ENCODE measurements at regions of chr7 and their contacts with region 1.

Region 1: GRCh38 chr7:133011746-133012145 is 70.1 kb downstream of the CHCHD3 start:
- DNase-seq: no peak
- H3K4me3 ChIP-seq: no peak overlapping the region
- H3K27ac ChIP-seq: no peak overlapping the region
- H3K4me1 ChIP-seq: no peaks in the 10 kb centered on the region
- H3K27me3 ChIP-seq: no peaks in the 10 kb centered on the region
- CTCF ChIP-seq: no peak

Region 2: DNA sequence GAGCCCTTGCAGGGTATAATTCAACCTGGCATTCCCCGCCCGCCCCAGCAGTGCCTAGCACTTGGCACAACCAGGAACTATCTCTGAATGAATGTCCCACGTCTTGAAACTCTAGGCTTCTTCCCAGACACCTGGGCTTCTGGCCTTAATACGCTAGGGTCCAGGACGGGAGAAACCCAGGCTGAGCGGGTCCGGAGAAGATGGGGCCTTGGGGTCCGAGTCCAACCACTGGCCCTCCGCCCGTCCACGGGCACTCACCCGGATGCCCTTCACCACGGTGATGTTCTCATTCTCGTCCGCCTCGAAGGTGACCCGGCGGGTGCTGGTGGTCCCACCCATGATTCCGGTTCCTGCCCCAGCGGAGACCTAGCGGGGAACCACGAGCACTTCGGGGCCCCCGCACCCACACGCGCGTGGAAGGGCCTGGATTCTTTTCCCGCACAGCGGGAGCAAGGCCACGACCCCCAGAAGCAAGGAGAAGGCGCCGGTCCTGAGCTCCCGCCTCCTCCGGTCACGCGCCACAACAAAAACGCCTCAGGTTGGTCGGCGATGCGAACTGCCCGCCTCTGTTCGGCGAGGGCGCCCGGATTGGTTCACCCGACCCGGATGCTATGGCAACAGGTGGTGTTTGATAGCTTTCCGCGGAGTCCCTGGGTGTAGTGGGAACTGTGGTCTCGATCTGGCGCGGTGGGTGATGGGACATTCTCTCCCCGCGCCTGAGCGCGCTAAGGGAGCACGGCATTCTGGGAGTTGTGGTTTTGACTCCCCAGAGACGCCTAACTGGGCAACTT is 70.0 kb after region 1 on chr7 and contains the start of gene CHCHD3:
- CTCF ChIA-PET with region 1: no interaction called
- POLR2A ChIA-PET with region 1: interaction called, 15 read pairs
- intact Hi-C with region 1: no loop called
- DNase-seq: peak; percentile 98
- H3K4me3 ChIP-seq: peak within 1 kb of the TSS; percentile 88
- H3K27ac ChIP-seq: 0 out of 2 replicates have a peak within 1 kb of the TSS, but pooled peaks have one; percentile 10
- H3K4me1 ChIP-seq: peaks cover 9% of the 10 kb centered on the region; the same call in 1 of the 2 replicates
- H3K27me3 ChIP-seq: peaks cover 14% of the 10 kb centered on the region; the same call in 1 of the 2 replicates
- CTCF ChIP-seq: no peak
- total RNA-seq, gene CHCHD3: 77.7 and 100 TPM in 2 replicates

Measured in PC-9 (cell line).